Activated CD4-positive, alpha-beta T cell treated with anti-CD3 and anti-CD28 coated beads, Interleukin-2, amount 10 ng/mL, durations not matched to agents 24 days and 14 days (primary cell): ENCODE measurements at regions of chr11 and their contacts with region 1.

Region 1: DNA sequence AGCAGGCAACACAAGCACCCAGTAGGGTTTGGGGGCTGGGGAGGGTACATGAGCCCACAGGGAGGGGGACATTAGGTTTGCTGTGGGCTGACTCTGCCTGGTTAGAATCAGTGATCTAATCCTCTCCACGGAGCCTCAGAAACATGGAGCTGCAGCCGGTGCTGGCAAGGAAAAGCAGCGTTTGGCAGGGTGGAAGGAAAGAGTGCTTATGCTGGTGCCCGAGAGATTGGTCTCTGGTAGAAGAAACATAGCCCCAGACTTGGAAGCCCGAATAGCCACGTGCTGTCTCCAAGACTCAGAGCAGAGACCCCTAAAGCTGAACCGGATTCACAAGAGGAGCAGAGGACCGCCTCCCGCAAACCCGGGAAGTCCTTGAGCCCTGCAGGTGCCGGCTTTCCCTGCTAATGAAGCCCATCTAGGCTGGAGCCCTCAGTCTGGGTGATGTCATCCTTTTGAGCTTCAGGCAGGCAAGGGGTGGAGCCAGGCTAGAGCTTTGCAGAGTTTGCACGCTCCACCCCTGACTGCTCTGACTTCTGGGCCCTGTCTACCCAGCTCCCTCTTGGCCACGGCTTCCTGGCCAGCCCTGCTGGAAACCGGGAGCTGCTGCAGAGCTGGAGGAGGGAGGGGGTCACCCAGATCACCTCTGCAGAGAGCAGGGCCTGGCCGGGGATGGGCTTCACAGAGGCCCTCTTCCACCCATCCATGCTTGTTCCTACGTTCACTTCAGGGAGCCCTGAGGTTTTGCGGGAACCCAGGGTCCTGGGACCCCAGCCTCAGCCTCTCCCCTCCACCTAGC is 35.0 kb upstream of the JAM3 start:
- DNase-seq: peak; percentile 92
- H3K4me3 Mint-ChIP-seq: peak overlapping the region; percentile 54
- H3K27ac Mint-ChIP-seq: peak overlapping the region; percentile 73
- H3K4me1 Mint-ChIP-seq: peaks cover 48% of the 10 kb centered on the region
- H3K27me3 Mint-ChIP-seq: peaks cover 7% of the 10 kb centered on the region

Region 2: GRCh38 chr11:133947321-133947756 is 86.6 kb before region 1 on chr11:
- intact Hi-C with region 1: loop called (anchors 1 kb)
- DNase-seq: peak; percentile 92
- H3K4me3 Mint-ChIP-seq: peak overlapping the region; percentile 88
- H3K27ac Mint-ChIP-seq: peak overlapping the region; percentile 97
- H3K4me1 Mint-ChIP-seq: peaks cover 75% of the 10 kb centered on the region
- H3K27me3 Mint-ChIP-seq: no peaks in the 10 kb centered on the region

Region 3: DNA sequence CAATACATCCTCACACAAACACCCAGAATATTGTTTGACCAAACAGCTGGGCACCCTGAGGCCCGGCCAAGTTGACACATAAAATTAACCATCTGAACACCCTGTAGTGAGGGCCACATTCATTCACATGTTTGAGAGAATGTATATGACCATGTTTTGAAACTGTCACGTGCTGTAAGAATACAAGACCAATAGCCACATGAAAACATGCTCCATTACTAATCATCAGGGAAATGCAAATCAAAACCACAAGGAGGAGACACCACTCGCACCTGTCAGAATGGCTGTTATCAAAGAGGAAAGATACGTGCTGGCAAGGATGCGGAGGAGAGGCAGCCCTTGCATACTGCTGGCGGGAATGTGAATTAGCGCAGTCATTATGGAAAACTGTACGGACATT is 38.8 kb before region 1 on chr11:
- intact Hi-C with region 1: no loop called
- DNase-seq: no peak
- H3K4me3 Mint-ChIP-seq: no peak overlapping the region
- H3K27ac Mint-ChIP-seq: no peak overlapping the region
- H3K4me1 Mint-ChIP-seq: peaks cover 10% of the 10 kb centered on the region
- H3K27me3 Mint-ChIP-seq: peaks cover 6% of the 10 kb centered on the region

Region 4: DNA sequence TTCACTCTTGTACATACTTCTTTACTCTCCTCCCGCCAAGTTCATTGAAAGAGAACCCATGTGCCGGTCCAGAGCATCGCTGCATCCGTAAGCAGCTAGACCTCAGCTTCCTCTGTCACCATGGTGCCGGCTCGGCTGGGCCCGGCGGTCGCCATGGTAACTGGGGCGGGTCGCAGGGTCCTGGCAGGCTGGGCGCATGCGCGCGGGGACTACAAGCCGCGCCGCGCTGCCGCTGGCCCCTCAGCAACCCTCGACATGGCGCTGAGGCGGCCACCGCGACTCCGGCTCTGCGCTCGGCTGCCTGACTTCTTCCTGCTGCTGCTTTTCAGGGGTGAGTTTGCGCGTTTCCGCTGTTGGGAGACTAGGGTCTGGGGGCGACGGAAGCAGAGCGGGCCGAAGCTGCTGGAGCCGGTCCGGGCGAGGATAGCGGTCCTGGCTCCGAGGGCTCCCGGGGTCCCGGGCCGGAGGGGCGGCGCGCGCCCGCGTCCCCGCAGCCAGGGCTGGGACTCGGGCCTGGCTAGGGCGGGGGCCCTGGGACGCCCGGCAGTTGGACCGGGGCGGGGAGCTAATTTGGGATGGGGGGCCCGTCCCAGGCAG is 35.0 kb after region 1 on chr11 and contains the start of gene JAM3:
- intact Hi-C with region 1: loop called (anchors 1 kb)
- DNase-seq: peak; percentile 99
- H3K4me3 Mint-ChIP-seq: peak within 1 kb of the TSS; percentile 96
- H3K27ac Mint-ChIP-seq: peak within 1 kb of the TSS; percentile 82
- H3K4me1 Mint-ChIP-seq: peaks cover 9% of the 10 kb centered on the region
- H3K27me3 Mint-ChIP-seq: peaks cover 61% of the 10 kb centered on the region
- total RNA-seq, gene JAM3: 4.7 and 5.0 TPM in 2 replicates